Natural killer cell (primary cell): ENCODE measurements at regions of chrX and their contacts with region 1.

Region 1: GRCh38 chrX:118459494-118459893 is 36.1 kb upstream of the DOCK11 start:
- DNase-seq: peak in 1 of 2 donors; percentile 67
- ATAC-seq: peak; percentile 55 to 67 (median 66)
- H3K4me3 ChIP-seq: no peak overlapping the region
- H3K4me3 Mint-ChIP-seq: no peak overlapping the region
- H3K27ac ChIP-seq: no peak overlapping the region
- H3K27ac Mint-ChIP-seq: no peak overlapping the region
- H3K4me1 ChIP-seq: no peaks in the 10 kb centered on the region
- H3K4me1 Mint-ChIP-seq: no peaks in the 10 kb centered on the region
- H3K27me3 ChIP-seq: no peaks in the 10 kb centered on the region
- H3K27me3 Mint-ChIP-seq: peaks cover 0 to 7% of the 10 kb centered on the region in 2 donors
- CTCF ChIP-seq: peak; percentile 46

Region 2: DNA sequence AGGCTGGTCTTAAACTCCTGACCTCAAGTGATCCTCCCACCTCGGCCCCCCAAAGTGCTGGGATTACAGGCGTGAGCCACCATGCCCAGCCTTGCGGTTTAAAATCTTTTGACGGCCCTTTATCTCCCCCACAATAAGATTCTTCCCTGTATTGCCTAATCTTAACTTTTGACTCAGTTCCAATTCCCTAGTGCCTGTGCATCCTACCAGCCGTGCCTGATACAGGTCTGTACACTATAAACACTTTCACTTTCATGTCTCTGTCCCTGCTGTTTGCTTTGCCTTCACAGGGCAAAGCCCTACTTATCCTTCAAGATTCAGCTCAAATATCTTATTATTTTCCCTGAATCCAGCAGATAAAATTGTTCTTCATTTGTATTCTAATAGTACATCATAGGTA is 39.0 kb before region 1 on chrX:
- intact Hi-C with region 1: no loop called
- DNase-seq: peak in 1 of 2 donors; percentile 1
- ATAC-seq: peak in 1 of 3 donors; percentile 53
- H3K4me3 ChIP-seq: no peak overlapping the region
- H3K4me3 Mint-ChIP-seq: no peak overlapping the region
- H3K27ac ChIP-seq: no peak overlapping the region
- H3K27ac Mint-ChIP-seq: peak overlapping the region in 1 of 2 donors; percentile 30
- H3K4me1 ChIP-seq: no peaks in the 10 kb centered on the region
- H3K4me1 Mint-ChIP-seq: peaks cover 10 to 19% of the 10 kb centered on the region in 2 donors
- H3K27me3 ChIP-seq: no peaks in the 10 kb centered on the region
- H3K27me3 Mint-ChIP-seq: no peaks in the 10 kb centered on the region
- CTCF ChIP-seq: no peak

Region 3: DNA sequence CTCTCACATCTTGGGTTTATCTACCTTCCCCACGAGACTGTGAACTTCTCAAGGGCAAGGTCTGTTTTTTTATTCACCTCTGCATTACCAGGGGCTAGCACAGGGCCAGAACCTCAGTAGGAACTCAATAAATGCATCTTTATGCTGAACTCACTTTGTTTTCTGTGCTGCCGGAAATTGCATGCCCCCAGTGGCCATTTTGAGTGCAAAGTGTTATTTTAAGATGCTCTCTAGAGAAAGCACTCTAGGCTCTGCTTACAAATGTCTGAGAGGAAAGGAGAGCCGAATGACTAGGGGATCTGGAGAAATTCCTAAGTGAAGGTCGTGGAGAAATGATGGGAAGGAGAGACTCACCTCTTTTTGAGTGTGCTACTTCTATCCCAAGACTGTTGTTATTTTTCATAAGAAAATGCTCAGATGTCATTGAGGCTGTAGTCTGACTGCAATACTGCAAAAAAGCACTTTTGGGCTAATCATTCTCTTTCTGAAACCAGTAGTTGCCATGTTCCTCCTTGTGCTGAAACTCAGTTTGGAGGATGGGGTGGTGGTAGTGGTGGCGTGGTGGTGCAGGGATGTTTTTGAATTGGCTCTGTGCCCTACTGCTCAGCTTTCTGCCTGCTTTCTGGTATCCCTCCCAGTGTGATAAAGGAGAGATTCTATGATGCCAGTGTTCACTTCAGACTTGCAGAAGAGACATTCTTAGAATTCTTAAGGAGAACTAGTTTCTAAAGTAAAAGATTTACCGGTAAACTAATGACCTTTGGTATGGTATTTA is 77.4 kb after region 1 on chrX:
- intact Hi-C with region 1: loop called (anchors 2 kb)
- DNase-seq: peak; percentile 29 to 75
- ATAC-seq: peak; percentile 74 to 81 (median 81)
- H3K4me3 ChIP-seq: no peak overlapping the region
- H3K4me3 Mint-ChIP-seq: peak overlapping the region; percentile 74
- H3K27ac ChIP-seq: peak overlapping the region; percentile 62
- H3K27ac Mint-ChIP-seq: peak overlapping the region; percentile 81 to 94
- H3K4me1 ChIP-seq: peaks cover 23% of the 10 kb centered on the region
- H3K4me1 Mint-ChIP-seq: peaks cover 39 to 56% of the 10 kb centered on the region in 2 donors
- H3K27me3 ChIP-seq: no peaks in the 10 kb centered on the region
- H3K27me3 Mint-ChIP-seq: no peaks in the 10 kb centered on the region
- CTCF ChIP-seq: peak; percentile 33

Region 4: DNA sequence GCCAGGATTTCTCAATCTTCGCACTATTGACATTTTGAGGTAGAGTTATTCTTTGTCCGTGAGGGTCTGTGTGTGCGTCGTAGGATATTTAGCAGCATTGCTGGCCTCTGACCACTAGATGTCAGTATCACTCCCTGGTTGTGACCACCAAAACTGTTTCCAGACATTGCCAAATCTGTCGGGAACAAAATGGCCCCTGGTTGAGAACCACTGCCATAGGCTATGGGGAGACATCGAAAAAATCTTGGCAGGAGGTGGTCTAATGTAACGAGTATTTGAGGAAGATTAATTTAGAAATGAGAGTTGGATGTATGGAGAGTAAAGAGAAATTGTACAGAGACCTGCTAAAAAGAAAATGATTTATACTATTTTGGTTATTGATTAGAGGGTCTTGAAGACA is 144.5 kb after region 1 on chrX:
- intact Hi-C with region 1: loop called (anchors 1 kb)
- DNase-seq: peak; percentile 14 to 68
- ATAC-seq: peak; percentile 69 to 83 (median 69)
- H3K4me3 ChIP-seq: no peak overlapping the region
- H3K4me3 Mint-ChIP-seq: no peak overlapping the region
- H3K27ac ChIP-seq: no peak overlapping the region
- H3K27ac Mint-ChIP-seq: peak overlapping the region; percentile 45 to 85
- H3K4me1 ChIP-seq: no peaks in the 10 kb centered on the region
- H3K4me1 Mint-ChIP-seq: peaks cover 8 to 21% of the 10 kb centered on the region in 2 donors
- H3K27me3 ChIP-seq: no peaks in the 10 kb centered on the region
- H3K27me3 Mint-ChIP-seq: no peaks in the 10 kb centered on the region
- CTCF ChIP-seq: peak; percentile 66